Cardiac septum (tissue), 1 donor: ENCODE measurements at regions of chr5 and their contacts with region 1.

Region 1: DNA sequence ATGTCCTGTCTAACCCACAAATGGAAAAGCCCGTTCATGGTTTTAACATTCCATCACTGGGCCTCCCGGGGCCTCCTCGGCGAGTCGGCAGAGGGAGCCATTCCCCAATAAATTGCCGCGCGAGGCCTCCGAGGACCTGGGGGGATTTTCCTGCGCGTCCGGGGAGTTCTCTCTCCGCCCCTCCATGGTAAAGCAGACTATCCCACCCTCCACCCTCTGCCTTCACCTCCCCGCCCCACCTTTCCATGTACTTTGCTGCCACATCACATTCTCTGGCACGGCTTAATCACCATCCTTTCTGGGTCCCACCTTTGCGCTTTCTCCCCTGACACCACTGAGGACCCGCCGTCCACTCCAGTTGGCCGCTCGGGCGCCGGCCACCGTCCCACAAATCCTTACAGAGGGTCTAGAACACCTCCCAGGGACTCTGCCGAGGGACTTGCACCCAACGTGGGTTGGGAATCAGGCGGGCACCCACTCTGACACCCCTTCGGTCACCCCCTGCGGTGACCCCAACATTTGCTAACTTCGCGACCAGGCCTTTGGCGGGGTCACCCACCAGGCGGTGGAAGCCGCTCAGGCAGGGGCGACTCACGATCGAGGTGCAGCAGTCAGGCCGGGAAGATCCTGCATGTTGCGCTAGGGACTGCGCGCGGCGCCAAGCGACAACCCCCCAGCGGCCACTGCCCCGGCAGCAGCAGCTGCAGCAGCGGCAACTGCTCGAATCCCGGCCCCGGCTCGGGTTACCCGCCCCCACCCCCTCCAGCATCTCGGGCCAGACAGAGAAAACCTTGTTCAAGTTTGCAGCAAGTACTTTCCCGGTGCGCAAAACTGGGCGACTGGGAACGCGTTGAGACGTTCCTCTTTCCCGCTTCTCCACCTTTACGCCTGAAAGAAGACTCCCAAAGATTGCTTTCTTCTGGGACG is at the start of gene MEGF10:
- DNase-seq: no peak
- total RNA-seq, gene MEGF10: 0.32 TPM

Region 2: GRCh38 chr5:127441799-127442484 is 151.7 kb after region 1 on chr5:
- intact Hi-C with region 1: loop called (anchors 10 kb)
- DNase-seq: no peak